ENCODE measurements at regions of chr16 and their contacts with region 1.

Region 1: GRCh38 chr16:88700636-88701482 is 5.3 kb downstream of the RNF166 start:
- DNase-seq: peak; percentile 95 to 99 (median 97)
- H3K4me3 ChIP-seq: peak overlapping the region; percentile 78 to 98
- H3K4me3 Mint-ChIP-seq: peak overlapping the region; percentile 93 to 96 (median 96)
- H3K27ac ChIP-seq: peak overlapping the region; percentile 85
- H3K27ac Mint-ChIP-seq: peak overlapping the region; percentile 97 to 99 (median 98)
- H3K4me1 ChIP-seq: peaks cover 79% of the 10 kb centered on the region
- H3K4me1 Mint-ChIP-seq: peaks cover 19 to 74% (median 50%) of the 10 kb centered on the region in 4 donors
- H3K27me3 ChIP-seq: no peaks in the 10 kb centered on the region
- H3K27me3 Mint-ChIP-seq: no peaks in the 10 kb centered on the region

Region 2: DNA sequence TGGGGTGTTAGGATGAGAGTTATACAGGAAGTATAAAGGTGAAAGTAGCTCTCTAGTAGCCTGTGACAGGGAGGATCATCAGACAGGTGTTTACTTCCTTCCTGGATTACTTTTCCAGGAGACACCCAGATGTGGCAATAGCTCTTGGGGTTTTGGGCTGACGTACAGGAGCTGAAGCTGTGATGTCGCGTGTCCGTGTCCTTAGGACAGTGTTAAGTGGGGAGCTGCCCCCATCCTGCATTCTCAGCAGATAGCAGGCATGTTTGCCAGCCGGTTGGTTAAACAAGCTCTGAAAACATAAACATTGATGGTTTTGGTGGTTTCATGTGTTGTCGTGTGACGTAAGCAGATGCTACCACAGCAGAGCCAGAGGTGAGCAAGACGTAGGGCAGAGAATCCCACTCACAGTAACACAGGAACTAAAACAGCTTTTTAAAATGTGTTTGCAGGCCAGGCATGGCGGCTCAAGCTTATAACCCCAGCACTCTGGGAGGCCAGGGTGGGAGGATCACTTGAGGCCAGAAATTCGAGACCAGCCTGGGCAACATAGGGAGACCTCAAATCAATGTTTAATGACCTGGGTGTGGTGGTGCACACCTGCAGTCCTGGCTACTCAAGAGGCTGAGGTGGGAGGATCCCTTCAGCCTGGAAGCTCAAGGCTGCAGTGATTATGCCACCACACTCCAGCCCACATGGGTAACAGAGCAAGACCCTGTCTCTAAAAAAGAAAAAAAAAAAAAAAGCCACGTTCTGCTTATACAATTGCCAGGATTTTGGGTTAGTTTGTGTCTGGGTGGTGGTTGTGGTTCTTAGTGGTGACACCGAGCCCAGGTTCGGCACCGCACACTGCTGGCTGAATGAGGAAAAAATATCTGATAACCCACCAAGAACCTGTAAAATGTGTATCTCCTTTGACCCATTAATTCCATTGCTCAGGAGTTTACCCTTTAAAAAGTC is 80.7 kb before region 1 on chr16:
- CTCF ChIA-PET with region 1: interaction called, 5 read pairs
- POLR2A ChIA-PET with region 1: interaction called, 73 read pairs
- intact Hi-C with region 1: loop called (anchors 1 kb)
- DNase-seq: peak; percentile 90 to 95 (median 92)
- H3K4me3 ChIP-seq: no peak overlapping the region
- H3K4me3 Mint-ChIP-seq: peak overlapping the region; percentile 46 to 85 (median 68)
- H3K27ac ChIP-seq: peak overlapping the region; percentile 65
- H3K27ac Mint-ChIP-seq: peak overlapping the region; percentile 98 to 100 (median 99)
- H3K4me1 ChIP-seq: peaks cover 45% of the 10 kb centered on the region
- H3K4me1 Mint-ChIP-seq: peaks cover 16 to 54% (median 31%) of the 10 kb centered on the region in 4 donors
- H3K27me3 ChIP-seq: no peaks in the 10 kb centered on the region
- H3K27me3 Mint-ChIP-seq: peaks cover 0 to 1% of the 10 kb centered on the region in 2 donors

Region 3: GRCh38 chr16:88639231-88640038 is 61.4 kb before region 1 on chr16:
- CTCF ChIA-PET with region 1: interaction called, 3 read pairs
- POLR2A ChIA-PET with region 1: interaction called, 13 read pairs
- intact Hi-C with region 1: loop called (anchors 5 kb)
- DNase-seq: no peak
- H3K4me3 ChIP-seq: no peak overlapping the region
- H3K4me3 Mint-ChIP-seq: peak overlapping the region in 2 of 8 donors; percentile 58 to 63
- H3K27ac ChIP-seq: no peak overlapping the region
- H3K27ac Mint-ChIP-seq: peak overlapping the region in 2 of 7 donors; percentile 84 to 92
- H3K4me1 ChIP-seq: peaks cover 50% of the 10 kb centered on the region
- H3K4me1 Mint-ChIP-seq: peaks cover 15 to 48% (median 32%) of the 10 kb centered on the region in 4 donors
- H3K27me3 ChIP-seq: peaks cover 11% of the 10 kb centered on the region
- H3K27me3 Mint-ChIP-seq: peaks cover 0 to 9% of the 10 kb centered on the region in 2 donors

Region 4: GRCh38 chr16:88662843-88663606 is 37.8 kb before region 1 on chr16 and contains the start of gene MVD:
- CTCF ChIA-PET with region 1: no interaction called
- POLR2A ChIA-PET with region 1: interaction called, 53 read pairs
- intact Hi-C with region 1: loop called (anchors 1 kb)
- DNase-seq: peak; percentile 93 to 96 (median 95)
- H3K4me3 ChIP-seq: peak within 1 kb of the TSS; percentile 65 to 95
- H3K4me3 Mint-ChIP-seq: peak within 1 kb of the TSS; percentile 91 to 95 (median 94)
- H3K27ac ChIP-seq: peak within 1 kb of the TSS; percentile 83
- H3K27ac Mint-ChIP-seq: peak within 1 kb of the TSS; percentile 80 to 98 (median 97)
- H3K4me1 ChIP-seq: peaks cover 16% of the 10 kb centered on the region
- H3K4me1 Mint-ChIP-seq: peaks cover 11 to 22% (median 15%) of the 10 kb centered on the region in 4 donors
- H3K27me3 ChIP-seq: no peaks in the 10 kb centered on the region
- H3K27me3 Mint-ChIP-seq: no peaks in the 10 kb centered on the region
- total RNA-seq, gene MVD: 49.2 to 57.0 TPM

Region 5: GRCh38 chr16:88725609-88726407 is 24.9 kb after region 1 on chr16:
- CTCF ChIA-PET with region 1: no interaction called
- POLR2A ChIA-PET with region 1: no interaction called
- intact Hi-C with region 1: no loop called
- DNase-seq: no peak
- H3K4me3 ChIP-seq: no peak overlapping the region
- H3K4me3 Mint-ChIP-seq: no peak overlapping the region
- H3K27ac ChIP-seq: no peak overlapping the region
- H3K27ac Mint-ChIP-seq: no peak overlapping the region
- H3K4me1 ChIP-seq: no peaks in the 10 kb centered on the region
- H3K4me1 Mint-ChIP-seq: peaks cover 0 to 1% (median 0%) of the 10 kb centered on the region in 4 donors
- H3K27me3 ChIP-seq: no peaks in the 10 kb centered on the region
- H3K27me3 Mint-ChIP-seq: no peaks in the 10 kb centered on the region

Region 6: DNA sequence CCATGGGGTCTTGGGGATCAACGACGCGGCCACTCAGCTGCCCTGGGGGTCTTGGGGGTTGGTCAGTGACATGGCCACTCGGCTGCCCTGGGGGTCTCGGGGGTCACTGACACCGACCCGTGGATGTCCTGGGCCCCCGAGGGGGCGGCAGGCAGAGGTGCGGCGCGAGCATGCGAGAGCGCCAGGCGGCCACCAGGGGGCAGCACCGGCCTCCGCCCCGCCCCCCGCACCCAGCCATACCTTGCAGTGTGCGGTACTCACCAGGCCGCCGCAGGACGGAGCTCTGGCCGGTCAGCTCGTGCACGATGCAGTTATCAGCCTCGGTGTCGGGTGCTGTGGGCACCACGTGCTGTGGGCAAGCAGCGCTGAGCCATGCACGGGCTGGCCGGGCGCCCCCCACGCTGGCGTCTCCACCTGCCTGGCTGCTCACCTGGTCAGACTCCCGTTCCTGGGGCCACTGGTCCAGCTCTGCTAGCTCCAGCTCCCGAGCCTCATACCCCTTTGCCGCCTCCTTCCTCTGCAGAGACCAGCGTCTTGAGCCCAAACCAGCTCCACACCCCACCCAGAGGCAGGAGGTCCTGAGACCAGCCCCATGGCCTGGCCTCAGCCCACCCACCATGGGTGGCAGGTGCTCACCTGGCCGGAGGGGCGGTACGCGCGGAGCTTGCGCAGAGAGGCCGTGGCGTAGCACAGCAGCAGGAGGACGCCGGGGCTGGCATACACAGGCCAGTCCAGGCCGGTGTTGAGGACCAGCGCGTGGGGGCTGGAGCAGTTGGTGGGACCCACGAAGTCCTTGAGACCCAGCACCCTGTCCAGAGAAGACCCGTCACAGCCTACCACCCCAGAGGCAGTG is 36.7 kb after region 1 on chr16:
- CTCF ChIA-PET with region 1: interaction called, 8 read pairs
- POLR2A ChIA-PET with region 1: interaction called, 8 read pairs
- intact Hi-C with region 1: loop called (anchors 5 kb)
- DNase-seq: peak; percentile 55 to 80 (median 75)
- H3K4me3 ChIP-seq: no peak overlapping the region
- H3K4me3 Mint-ChIP-seq: no peak overlapping the region
- H3K27ac ChIP-seq: peak overlapping the region; percentile 6
- H3K27ac Mint-ChIP-seq: peak overlapping the region in 4 of 7 donors; percentile 52 to 78 (median 54)
- H3K4me1 ChIP-seq: peaks cover 6% of the 10 kb centered on the region
- H3K4me1 Mint-ChIP-seq: peaks cover 0 to 13% (median 2%) of the 10 kb centered on the region in 4 donors
- H3K27me3 ChIP-seq: no peaks in the 10 kb centered on the region
- H3K27me3 Mint-ChIP-seq: no peaks in the 10 kb centered on the region

Measured in CD4-positive, alpha-beta memory T cell (primary cell).